Naive thymus-derived CD4-positive, alpha-beta T cell (primary cell): ENCODE measurements at regions of chr6 and their contacts with region 1.

Region 1: DNA sequence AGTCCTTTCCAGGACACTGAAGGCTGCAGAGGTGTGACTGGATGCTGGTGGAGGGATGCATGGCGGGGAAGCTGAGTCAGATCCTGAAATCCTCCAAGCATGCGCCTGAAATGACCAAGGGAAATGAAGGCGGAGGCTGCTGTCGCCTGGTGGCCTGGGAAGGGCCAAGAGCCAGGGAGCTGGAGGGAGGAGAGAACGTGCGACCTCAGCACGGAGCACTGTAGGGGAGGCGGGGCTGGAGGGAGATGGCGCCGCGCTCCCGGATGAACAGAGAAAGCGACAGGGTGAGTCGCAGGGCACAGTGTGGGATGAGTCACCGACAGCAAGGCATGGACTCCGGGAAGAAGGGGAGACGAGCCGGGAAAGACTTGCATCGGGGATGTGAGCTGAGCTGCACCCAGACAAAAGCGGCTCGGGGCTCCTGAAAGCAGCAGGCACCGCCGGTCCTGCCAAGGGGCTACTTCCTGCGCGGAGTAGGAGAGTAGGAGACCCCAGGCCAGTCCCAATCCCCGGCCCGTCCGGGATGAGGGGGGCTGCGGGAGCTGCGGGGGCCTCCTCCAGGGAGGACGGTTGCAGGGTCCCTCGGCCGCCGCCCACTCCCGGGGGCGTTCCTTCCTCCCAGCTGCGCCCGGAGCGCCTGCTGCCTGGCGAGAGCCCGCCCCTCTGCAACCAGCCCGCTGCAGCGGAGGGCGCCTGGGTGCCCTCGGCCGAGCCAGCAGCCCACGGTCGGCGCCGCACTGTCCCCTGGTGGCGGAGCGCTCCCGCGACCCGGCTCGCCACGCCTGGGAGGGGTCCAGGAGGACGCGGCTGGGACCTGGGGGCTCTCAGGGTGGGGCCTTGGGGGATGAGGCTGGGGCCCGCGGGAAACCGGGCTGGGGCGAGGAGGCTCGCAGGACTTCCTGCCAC is 11.0 kb upstream of the NQO2 start:
- DNase-seq: peak in 8 of 9 donors; percentile 68 to 84 (median 78)
- ATAC-seq: peak; percentile 87
- H3K4me3 ChIP-seq: peak overlapping the region; percentile 76
- H3K4me3 Mint-ChIP-seq: peak overlapping the region; percentile 88 to 98 (median 96)
- H3K27ac ChIP-seq: peak overlapping the region; percentile 94
- H3K27ac Mint-ChIP-seq: peak overlapping the region; percentile 94 to 100 (median 100)
- H3K4me1 ChIP-seq: peaks cover 14% of the 10 kb centered on the region in 2 donors
- H3K4me1 Mint-ChIP-seq: peaks cover 15 to 41% (median 30%) of the 10 kb centered on the region in 7 donors
- H3K27me3 ChIP-seq: no peaks in the 10 kb centered on the region
- H3K27me3 Mint-ChIP-seq: peaks cover 0 to 11% (median 0%) of the 10 kb centered on the region in 5 donors

Region 2: GRCh38 chr6:2765166-2765895 is 223.3 kb before region 1 on chr6 and contains the start of gene WRNIP1:
- CTCF ChIA-PET with region 1: interaction called, 5 read pairs
- POLR2A ChIA-PET with region 1: interaction called, 23 read pairs
- intact Hi-C with region 1: loop called (anchors 1 kb)
- DNase-seq: peak; percentile 89 to 97 (median 97)
- ATAC-seq: peak; percentile 90
- H3K4me3 ChIP-seq: peak within 1 kb of the TSS; percentile 76
- H3K4me3 Mint-ChIP-seq: peak within 1 kb of the TSS; percentile 86 to 96 (median 94)
- H3K27ac ChIP-seq: peak within 1 kb of the TSS; percentile 88
- H3K27ac Mint-ChIP-seq: peak within 1 kb of the TSS; percentile 89 to 100 (median 99)
- H3K4me1 ChIP-seq: peaks cover 30 to 31% of the 10 kb centered on the region in 2 donors
- H3K4me1 Mint-ChIP-seq: peaks cover 27 to 54% (median 50%) of the 10 kb centered on the region in 7 donors
- H3K27me3 ChIP-seq: no peaks in the 10 kb centered on the region
- H3K27me3 Mint-ChIP-seq: no peaks in the 10 kb centered on the region
- total RNA-seq, gene WRNIP1: 31.2 to 47.6 (median 37.8) TPM

Region 3: DNA sequence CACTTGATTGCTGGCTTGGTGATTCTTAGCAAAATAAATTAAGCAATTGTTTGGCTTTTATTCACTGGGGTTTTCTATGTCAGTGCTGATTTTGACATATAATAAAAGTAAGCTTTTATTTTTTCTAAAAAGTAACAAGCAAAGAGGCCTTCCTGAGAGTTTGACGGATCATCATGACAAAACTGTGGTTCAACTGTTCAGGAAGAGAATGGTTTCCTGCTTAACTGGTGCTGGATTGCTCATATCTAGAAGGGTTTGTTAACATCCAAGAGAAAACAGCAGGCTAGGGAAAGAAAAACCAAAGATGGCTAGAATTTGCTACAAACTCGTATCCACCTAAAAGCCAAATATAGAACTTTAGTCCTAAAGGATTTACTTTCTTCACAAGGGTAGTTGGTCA is 168.3 kb before region 1 on chr6:
- CTCF ChIA-PET with region 1: no interaction called
- POLR2A ChIA-PET with region 1: no interaction called
- intact Hi-C with region 1: no loop called
- DNase-seq: no peak
- ATAC-seq: no peak
- H3K4me3 ChIP-seq: no peak overlapping the region
- H3K4me3 Mint-ChIP-seq: peak overlapping the region in 1 of 10 donors; percentile 6
- H3K27ac ChIP-seq: no peak overlapping the region
- H3K27ac Mint-ChIP-seq: no peak overlapping the region
- H3K4me1 ChIP-seq: peaks cover 0 to 5% of the 10 kb centered on the region in 2 donors
- H3K4me1 Mint-ChIP-seq: peaks cover 12 to 42% (median 34%) of the 10 kb centered on the region in 7 donors
- H3K27me3 ChIP-seq: no peaks in the 10 kb centered on the region
- H3K27me3 Mint-ChIP-seq: no peaks in the 10 kb centered on the region

Region 4: GRCh38 chr6:2859185-2859700 is 129.4 kb before region 1 on chr6:
- CTCF ChIA-PET with region 1: interaction called, 5 read pairs
- POLR2A ChIA-PET with region 1: interaction called, 45 read pairs
- intact Hi-C with region 1: loop called in 1 of 2 experiments (anchors 1 kb)
- DNase-seq: peak in 5 of 9 donors; percentile 78 to 84 (median 80)
- ATAC-seq: no peak
- H3K4me3 ChIP-seq: peak overlapping the region; percentile 56
- H3K4me3 Mint-ChIP-seq: peak overlapping the region; percentile 79 to 98 (median 88)
- H3K27ac ChIP-seq: peak overlapping the region; percentile 86
- H3K27ac Mint-ChIP-seq: peak overlapping the region; percentile 98 to 100 (median 99)
- H3K4me1 ChIP-seq: peaks cover 81 to 84% of the 10 kb centered on the region in 2 donors
- H3K4me1 Mint-ChIP-seq: peaks cover 66 to 95% (median 89%) of the 10 kb centered on the region in 7 donors
- H3K27me3 ChIP-seq: no peaks in the 10 kb centered on the region
- H3K27me3 Mint-ChIP-seq: no peaks in the 10 kb centered on the region

Region 5: GRCh38 chr6:2940010-2940850 is 48.4 kb before region 1 on chr6:
- CTCF ChIA-PET with region 1: interaction called, 45 read pairs
- POLR2A ChIA-PET with region 1: interaction called, 440 read pairs
- intact Hi-C with region 1: loop called (anchors 1 kb)
- DNase-seq: peak in 8 of 9 donors; percentile 70 to 90 (median 82)
- ATAC-seq: peak; percentile 81
- H3K4me3 ChIP-seq: peak overlapping the region; percentile 72
- H3K4me3 Mint-ChIP-seq: peak overlapping the region; percentile 81 to 94 (median 88)
- H3K27ac ChIP-seq: peak overlapping the region; percentile 81
- H3K27ac Mint-ChIP-seq: peak overlapping the region; percentile 93 to 100 (median 97)
- H3K4me1 ChIP-seq: peaks cover 27 to 76% of the 10 kb centered on the region in 2 donors
- H3K4me1 Mint-ChIP-seq: peaks cover 33 to 88% (median 79%) of the 10 kb centered on the region in 7 donors
- H3K27me3 ChIP-seq: no peaks in the 10 kb centered on the region
- H3K27me3 Mint-ChIP-seq: peaks cover 0 to 22% (median 0%) of the 10 kb centered on the region in 5 donors

Region 6: DNA sequence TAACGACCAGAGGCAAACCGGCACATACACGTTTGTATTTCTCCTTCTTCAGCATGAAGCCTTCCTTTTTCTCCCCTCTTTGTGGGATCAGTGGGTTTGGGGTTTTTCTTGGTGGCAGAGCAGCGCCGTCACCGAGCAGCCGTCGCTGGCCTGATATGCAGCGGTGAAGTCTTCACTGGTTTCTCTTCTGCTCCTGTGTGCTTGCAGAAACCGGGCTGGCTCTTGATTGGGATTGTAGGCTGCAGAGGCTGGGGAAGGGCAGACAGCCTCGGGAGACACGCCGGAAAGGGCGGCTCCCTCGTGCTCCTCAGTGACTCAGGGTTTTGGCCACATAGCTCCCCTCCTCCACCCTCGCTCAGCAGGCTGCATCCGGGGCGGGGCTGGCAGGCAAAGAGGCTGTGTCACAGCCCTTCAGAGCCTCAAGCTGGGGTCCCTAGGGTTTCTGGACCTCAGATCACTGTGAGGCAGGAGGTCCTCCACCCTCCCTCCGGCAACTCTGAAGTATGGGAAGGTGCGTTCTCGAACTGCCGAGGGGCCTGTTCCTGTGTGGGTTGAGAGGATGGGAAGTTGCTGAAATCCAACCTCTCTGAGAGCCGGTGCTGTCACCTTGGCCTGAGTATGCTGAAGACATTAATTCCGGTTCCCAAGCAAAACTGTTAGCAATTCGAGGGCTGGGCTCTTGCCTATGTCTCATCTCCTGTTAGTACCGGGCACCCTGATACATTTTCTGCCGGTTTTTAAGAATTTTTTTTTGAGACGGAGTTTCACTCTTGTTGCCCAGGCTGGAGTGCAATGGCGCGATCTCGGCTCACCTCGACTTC is 35.2 kb after region 1 on chr6:
- CTCF ChIA-PET with region 1: interaction called, 5 read pairs
- POLR2A ChIA-PET with region 1: interaction called, 17 read pairs
- intact Hi-C with region 1: loop called in 1 of 2 experiments (anchors 1 kb)
- DNase-seq: peak; percentile 57 to 89 (median 72)
- ATAC-seq: peak; percentile 90
- H3K4me3 ChIP-seq: peak overlapping the region; percentile 69
- H3K4me3 Mint-ChIP-seq: peak overlapping the region; percentile 80 to 94 (median 88)
- H3K27ac ChIP-seq: peak overlapping the region; percentile 18
- H3K27ac Mint-ChIP-seq: peak overlapping the region in 8 of 9 donors; percentile 58 to 98 (median 82)
- H3K4me1 ChIP-seq: peaks cover 29 to 38% of the 10 kb centered on the region in 2 donors
- H3K4me1 Mint-ChIP-seq: peaks cover 23 to 56% (median 43%) of the 10 kb centered on the region in 7 donors
- H3K27me3 ChIP-seq: no peaks in the 10 kb centered on the region
- H3K27me3 Mint-ChIP-seq: peaks cover 0 to 1% (median 0%) of the 10 kb centered on the region in 5 donors

Region 7: GRCh38 chr6:3157131-3157927 is 168.7 kb after region 1 on chr6 and contains the start of gene TUBB2A:
- CTCF ChIA-PET with region 1: no interaction called
- POLR2A ChIA-PET with region 1: interaction called, 7 read pairs
- intact Hi-C with region 1: loop called (anchors 1 to 2 kb)
- DNase-seq: peak; percentile 83 to 96 (median 90)
- ATAC-seq: peak; percentile 87
- H3K4me3 ChIP-seq: peak within 1 kb of the TSS; percentile 61
- H3K4me3 Mint-ChIP-seq: peak within 1 kb of the TSS; percentile 81 to 94 (median 92)
- H3K27ac ChIP-seq: peak within 1 kb of the TSS; percentile 86
- H3K27ac Mint-ChIP-seq: peak within 1 kb of the TSS; percentile 75 to 96 (median 93)
- H3K4me1 ChIP-seq: peaks cover 15 to 17% of the 10 kb centered on the region in 2 donors
- H3K4me1 Mint-ChIP-seq: peaks cover 4 to 37% (median 33%) of the 10 kb centered on the region in 7 donors
- H3K27me3 ChIP-seq: no peaks in the 10 kb centered on the region
- H3K27me3 Mint-ChIP-seq: peaks cover 0 to 52% (median 4%) of the 10 kb centered on the region in 5 donors
- total RNA-seq, gene TUBB2A: 2.2 to 39.6 (median 3.1) TPM

Region 8: DNA sequence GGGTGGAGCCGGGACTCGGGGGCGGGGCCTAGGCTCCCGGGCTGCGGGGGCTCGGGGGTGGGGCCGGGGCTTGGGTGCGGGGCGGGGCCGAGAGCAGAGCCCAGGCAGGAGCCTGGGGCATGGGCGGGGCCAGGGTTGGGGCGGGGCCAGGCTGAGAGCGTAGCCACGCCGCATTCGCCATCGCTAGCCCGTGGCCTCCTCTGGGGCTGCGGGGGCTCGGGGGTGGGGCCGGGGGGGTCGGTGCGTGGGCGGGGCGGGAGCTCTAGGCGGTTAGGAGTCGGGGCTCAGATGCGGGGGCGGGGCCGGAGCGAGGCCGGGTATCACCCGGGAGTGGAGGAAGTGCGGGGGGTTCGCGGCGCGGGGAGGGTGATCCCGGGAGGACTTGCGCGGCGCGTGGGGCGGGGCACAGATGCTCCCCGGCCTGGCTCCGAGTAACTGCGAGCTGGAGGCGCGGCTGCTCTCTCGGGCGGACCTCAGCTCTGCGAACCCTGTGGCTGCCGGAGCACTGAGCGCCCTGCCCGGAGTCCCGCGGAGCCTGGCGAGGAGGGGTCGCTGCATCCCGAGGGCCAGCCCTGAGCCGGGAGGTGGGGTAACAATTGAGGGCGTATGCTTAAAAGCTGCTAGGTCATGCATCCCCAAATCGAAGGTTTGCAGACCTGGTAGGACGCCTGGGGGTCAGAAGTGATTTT is 1147.1 kb after region 1 on chr6:
- CTCF ChIA-PET with region 1: no interaction called
- POLR2A ChIA-PET with region 1: no interaction called
- intact Hi-C with region 1: loop called in 1 of 2 experiments (anchors 2 kb)
- DNase-seq: peak; percentile 74 to 93 (median 86)
- ATAC-seq: peak; percentile 97
- H3K4me3 ChIP-seq: peak overlapping the region; percentile 67
- H3K4me3 Mint-ChIP-seq: peak overlapping the region; percentile 83 to 94 (median 87)
- H3K27ac ChIP-seq: peak overlapping the region; percentile 76
- H3K27ac Mint-ChIP-seq: peak overlapping the region; percentile 55 to 88 (median 84)
- H3K4me1 ChIP-seq: peaks cover 10 to 14% of the 10 kb centered on the region in 2 donors
- H3K4me1 Mint-ChIP-seq: peaks cover 20 to 52% (median 37%) of the 10 kb centered on the region in 7 donors
- H3K27me3 ChIP-seq: no peaks in the 10 kb centered on the region
- H3K27me3 Mint-ChIP-seq: no peaks in the 10 kb centered on the region